ENCODE measurements at regions of chr17 and their contacts with region 1.

Region 1: GRCh38 chr17:36214918-36215317 is 4.1 kb downstream of the CCL4L2 start:
- DNase-seq: no peak
- H3K4me3 ChIP-seq: no peak overlapping the region
- H3K27ac ChIP-seq: no peak overlapping the region
- H3K4me1 ChIP-seq: no peaks in the 10 kb centered on the region
- H3K27me3 ChIP-seq: no peaks in the 10 kb centered on the region
- CTCF ChIP-seq: no peak
- EP300 ChIP-seq: no peak
- POLR2A ChIP-seq: no peak

Region 2: DNA sequence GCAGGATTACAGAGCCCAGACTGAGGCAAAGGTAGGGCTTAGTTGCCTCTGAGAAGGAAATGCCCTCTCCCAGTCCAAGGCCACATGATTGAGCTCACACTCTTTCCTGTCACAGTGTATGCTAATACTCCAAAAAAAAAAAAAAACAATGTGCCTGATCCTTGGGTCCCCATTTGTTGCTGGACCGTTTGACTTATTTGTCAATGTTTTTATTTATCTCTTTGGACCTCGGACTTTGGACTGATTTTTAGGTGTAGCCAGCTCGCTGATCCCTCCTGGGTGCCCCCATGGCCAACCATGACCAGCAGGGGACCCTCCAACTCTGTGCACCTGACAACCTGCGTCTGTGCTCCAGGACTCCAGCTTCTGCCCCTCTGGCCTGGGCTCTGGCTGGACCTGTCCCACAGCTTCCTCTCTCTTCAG is 233.0 kb before region 1 on chr17:
- in situ Hi-C with region 1: no loop called
- intact Hi-C with region 1: loop called (anchors 5 kb)
- DNase-seq: peak; percentile 28
- H3K4me3 ChIP-seq: no peak overlapping the region
- H3K27ac ChIP-seq: no peak overlapping the region
- H3K4me1 ChIP-seq: peaks cover 0 to 4% (median 0%) of the 10 kb centered on the region in 4 donors
- H3K27me3 ChIP-seq: no peaks in the 10 kb centered on the region
- CTCF ChIP-seq: peak in 3 of 5 experiments; percentile 6 to 23 (median 16)
- EP300 ChIP-seq: no peak
- POLR2A ChIP-seq: no peak

Region 3: DNA sequence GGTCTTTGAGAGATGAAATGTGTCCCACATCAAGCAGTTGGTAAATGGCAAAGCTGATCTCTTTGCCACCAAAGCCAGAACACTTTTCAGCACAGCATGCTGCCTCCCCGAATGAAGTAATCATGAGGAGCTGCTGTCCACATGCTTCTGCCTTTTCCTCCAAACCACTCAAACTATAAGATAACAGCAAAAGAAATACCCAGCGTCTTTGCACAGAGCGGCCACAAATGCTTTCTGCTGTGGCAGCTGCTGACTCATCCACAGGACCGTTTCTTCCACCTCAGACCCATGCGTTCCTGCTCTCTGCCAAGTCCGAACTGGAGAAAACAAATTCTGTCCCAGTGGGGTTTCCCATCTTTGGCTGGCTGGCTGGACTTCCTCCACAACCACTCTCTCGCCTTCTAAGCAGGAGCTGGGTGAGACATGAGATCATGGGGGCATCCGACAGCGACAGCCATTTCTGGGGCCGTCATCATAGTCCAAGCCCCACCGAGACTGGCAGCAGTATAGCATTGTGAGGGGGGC is 65.6 kb before region 1 on chr17:
- in situ Hi-C with region 1: no loop called
- intact Hi-C with region 1: no loop called
- DNase-seq: no peak
- H3K4me3 ChIP-seq: no peak overlapping the region
- H3K27ac ChIP-seq: no peak overlapping the region
- H3K4me1 ChIP-seq: peaks cover 0 to 12% (median 3%) of the 10 kb centered on the region in 4 donors
- H3K27me3 ChIP-seq: peaks cover 14% of the 10 kb centered on the region
- CTCF ChIP-seq: no peak
- EP300 ChIP-seq: no peak
- POLR2A ChIP-seq: no peak

Region 4: DNA sequence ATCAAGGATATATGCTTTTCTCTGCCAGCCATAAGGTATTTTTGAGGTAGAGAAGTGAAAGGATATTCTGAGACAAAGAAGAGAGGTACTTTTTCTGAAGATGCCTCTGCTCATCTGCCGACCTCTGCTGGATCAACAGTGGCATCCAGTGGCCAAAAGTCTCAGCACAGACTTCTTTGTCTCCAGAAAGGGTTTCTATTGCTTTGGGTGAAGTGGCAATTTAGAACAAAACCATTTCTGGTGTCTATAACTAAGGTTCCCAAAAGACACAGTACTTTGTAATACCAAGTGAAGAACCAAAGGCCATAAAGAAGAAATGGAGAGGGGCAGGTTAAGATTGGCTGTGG is 1005.7 kb after region 1 on chr17:
- in situ Hi-C with region 1: no loop called
- intact Hi-C with region 1: no loop called
- DNase-seq: peak; percentile 9
- H3K4me3 ChIP-seq: no peak overlapping the region
- H3K27ac ChIP-seq: no peak overlapping the region
- H3K4me1 ChIP-seq: no peaks in the 10 kb centered on the region
- H3K27me3 ChIP-seq: no peaks in the 10 kb centered on the region
- CTCF ChIP-seq: no peak
- EP300 ChIP-seq: no peak
- POLR2A ChIP-seq: no peak

Measured in transverse colon (tissue), 4 donors.